Aorta (tissue), 5 donors: ENCODE measurements at regions of chr19 and their contacts with region 1.

Region 1: GRCh38 chr19:57819475-57820148 is 4.9 kb upstream of the ZNF552 start:
- DNase-seq: peak; percentile 85 to 91
- ATAC-seq: peak; percentile 92
- H3K4me3 ChIP-seq: peak overlapping the region; percentile 28 to 99
- H3K27ac ChIP-seq: peak overlapping the region; percentile 16 to 61
- H3K4me1 ChIP-seq: no peaks in the 10 kb centered on the region
- H3K27me3 ChIP-seq: no peaks in the 10 kb centered on the region

Region 2: GRCh38 chr19:56980906-56981305 is 838.7 kb before region 1 on chr19:
- intact Hi-C with region 1: no loop called
- DNase-seq: no peak
- ATAC-seq: no peak
- H3K4me3 ChIP-seq: no peak overlapping the region
- H3K27ac ChIP-seq: no peak overlapping the region
- H3K4me1 ChIP-seq: no peaks in the 10 kb centered on the region
- H3K27me3 ChIP-seq: no peaks in the 10 kb centered on the region

Region 3: GRCh38 chr19:57171551-57172081 is 648.0 kb before region 1 on chr19:
- intact Hi-C with region 1: loop called in 1 of 2 experiments (anchors 10 kb)
- DNase-seq: peak; percentile 67 to 85
- ATAC-seq: peak; percentile 78
- H3K4me3 ChIP-seq: peak overlapping the region; percentile 42 to 72
- H3K27ac ChIP-seq: no peak overlapping the region
- H3K4me1 ChIP-seq: no peaks in the 10 kb centered on the region
- H3K27me3 ChIP-seq: no peaks in the 10 kb centered on the region

Region 4: GRCh38 chr19:57830071-57830602 is 10.5 kb after region 1 on chr19 and contains the start of gene ZNF587B:
- intact Hi-C with region 1: no loop called
- DNase-seq: peak; percentile 78 to 80
- ATAC-seq: peak; percentile 88
- H3K4me3 ChIP-seq: peak within 1 kb of the TSS in 1 of 2 donors; percentile 17
- H3K27ac ChIP-seq: peak within 1 kb of the TSS in 1 of 2 donors; percentile 32
- H3K4me1 ChIP-seq: no peaks in the 10 kb centered on the region
- H3K27me3 ChIP-seq: no peaks in the 10 kb centered on the region
- total RNA-seq, gene ZNF587B: 14.1 to 15.8 TPM